ENCODE measurements at regions of chr2 and their contacts with region 1.

Region 1: DNA sequence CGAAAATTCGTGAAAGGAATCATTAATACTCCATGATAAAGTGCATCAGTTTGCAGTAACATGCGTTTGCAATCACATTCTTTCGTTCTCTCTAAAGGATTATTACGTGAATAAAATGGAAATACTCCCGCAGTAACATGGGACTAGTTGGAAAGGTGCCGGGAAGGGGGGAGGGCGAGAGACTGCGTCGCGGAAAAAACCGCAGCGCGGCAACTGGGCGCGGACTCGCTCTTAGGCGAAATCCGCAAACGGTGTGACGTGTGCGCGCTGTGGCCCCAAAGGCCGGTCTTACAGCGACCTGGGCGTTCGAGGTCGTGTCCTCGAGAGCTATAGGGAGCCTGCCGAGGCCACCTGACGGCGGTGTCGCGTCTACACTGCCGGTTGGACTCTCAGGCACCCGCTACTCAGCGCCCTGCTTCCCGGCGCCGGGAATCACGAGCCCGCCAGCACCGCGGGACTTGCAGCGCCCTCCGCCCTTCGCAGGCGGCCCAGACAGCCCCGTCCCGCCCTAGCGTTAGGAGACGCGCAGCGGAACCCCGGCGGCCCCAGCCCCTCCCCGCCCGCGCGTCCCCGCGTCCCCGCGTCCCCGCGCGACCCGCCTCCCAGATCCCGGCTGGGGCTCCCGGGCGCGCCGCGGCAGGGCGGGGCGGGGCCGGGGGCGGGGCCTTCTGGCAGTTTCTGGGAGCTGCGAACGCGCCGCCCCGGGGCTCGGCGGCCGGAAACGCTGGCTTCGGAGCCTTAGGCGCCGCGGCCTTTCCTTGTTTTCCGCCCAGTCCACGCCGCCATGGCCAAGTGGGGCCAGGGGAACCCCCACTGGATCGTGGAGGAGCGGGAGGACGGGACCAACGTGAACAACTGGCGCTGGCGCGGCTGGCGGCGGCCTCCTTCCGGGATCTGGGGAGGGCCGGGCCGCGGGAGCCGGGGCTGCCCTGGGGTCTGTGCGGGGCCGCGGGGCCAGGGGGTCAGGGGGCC is 15.1 kb downstream of the C2orf74 start:
- DNase-seq: peak; percentile 86 to 98 (median 94)
- ATAC-seq: peak; percentile 84
- H3K4me3 ChIP-seq: peak overlapping the region; percentile 88
- H3K4me3 Mint-ChIP-seq: peak overlapping the region; percentile 90
- H3K27ac ChIP-seq: peak overlapping the region; percentile 90 to 91
- H3K27ac Mint-ChIP-seq: peak overlapping the region; percentile 86
- H3K4me1 ChIP-seq: peaks cover 57% of the 10 kb centered on the region
- H3K4me1 Mint-ChIP-seq: peaks cover 48% of the 10 kb centered on the region
- H3K27me3 ChIP-seq: no peaks in the 10 kb centered on the region
- H3K27me3 Mint-ChIP-seq: no peaks in the 10 kb centered on the region
- CTCF ChIP-seq: no peak

Region 2: GRCh38 chr2:60881047-60881932 is 295.8 kb before region 1 on chr2 and contains the start of gene REL:
- CTCF ChIA-PET with region 1: no interaction called
- POLR2A ChIA-PET with region 1: interaction called, 26 read pairs
- intact Hi-C with region 1: loop called in 1 of 2 experiments (anchors 5 kb)
- DNase-seq: peak; percentile 75 to 98 (median 84)
- ATAC-seq: peak; percentile 83
- H3K4me3 ChIP-seq: peak within 1 kb of the TSS; percentile 94
- H3K4me3 Mint-ChIP-seq: peak within 1 kb of the TSS; percentile 96
- H3K27ac ChIP-seq: peak within 1 kb of the TSS; percentile 100
- H3K27ac Mint-ChIP-seq: peak within 1 kb of the TSS; percentile 98
- H3K4me1 ChIP-seq: peaks cover 5% of the 10 kb centered on the region
- H3K4me1 Mint-ChIP-seq: peaks cover 42% of the 10 kb centered on the region
- H3K27me3 ChIP-seq: no peaks in the 10 kb centered on the region
- H3K27me3 Mint-ChIP-seq: no peaks in the 10 kb centered on the region
- CTCF ChIP-seq: no peak
- total RNA-seq, gene REL: 91.9 to 99.9 TPM

Region 3: GRCh38 chr2:61065715-61066709 is 111.0 kb before region 1 on chr2 and contains the start of gene SANBR:
- CTCF ChIA-PET with region 1: interaction called, 3 read pairs
- POLR2A ChIA-PET with region 1: interaction called, 11 read pairs
- intact Hi-C with region 1: loop called (anchors 5 kb)
- DNase-seq: peak; percentile 59 to 93 (median 78)
- ATAC-seq: peak; percentile 97
- H3K4me3 ChIP-seq: peak within 1 kb of the TSS; percentile 63
- H3K4me3 Mint-ChIP-seq: peak within 1 kb of the TSS; percentile 99
- H3K27ac ChIP-seq: peak within 1 kb of the TSS in 1 of 2 donors; percentile 30
- H3K27ac Mint-ChIP-seq: peak within 1 kb of the TSS; percentile 68
- H3K4me1 ChIP-seq: peaks cover 11% of the 10 kb centered on the region
- H3K4me1 Mint-ChIP-seq: peaks cover 7% of the 10 kb centered on the region
- H3K27me3 ChIP-seq: no peaks in the 10 kb centered on the region
- H3K27me3 Mint-ChIP-seq: no peaks in the 10 kb centered on the region
- CTCF ChIP-seq: no peak
- total RNA-seq, gene SANBR: 1.1 to 1.3 TPM

Region 4: GRCh38 chr2:61165946-61166345 is 11.1 kb before region 1 on chr2:
- CTCF ChIA-PET with region 1: interaction called, 3 read pairs
- POLR2A ChIA-PET with region 1: interaction called, 11 read pairs
- intact Hi-C with region 1: no loop called
- DNase-seq: no peak
- ATAC-seq: no peak
- H3K4me3 ChIP-seq: no peak overlapping the region
- H3K4me3 Mint-ChIP-seq: no peak overlapping the region
- H3K27ac ChIP-seq: no peak overlapping the region
- H3K27ac Mint-ChIP-seq: no peak overlapping the region
- H3K4me1 ChIP-seq: no peaks in the 10 kb centered on the region
- H3K4me1 Mint-ChIP-seq: peaks cover 8% of the 10 kb centered on the region
- H3K27me3 ChIP-seq: no peaks in the 10 kb centered on the region
- H3K27me3 Mint-ChIP-seq: no peaks in the 10 kb centered on the region
- CTCF ChIP-seq: no peak

Region 5: DNA sequence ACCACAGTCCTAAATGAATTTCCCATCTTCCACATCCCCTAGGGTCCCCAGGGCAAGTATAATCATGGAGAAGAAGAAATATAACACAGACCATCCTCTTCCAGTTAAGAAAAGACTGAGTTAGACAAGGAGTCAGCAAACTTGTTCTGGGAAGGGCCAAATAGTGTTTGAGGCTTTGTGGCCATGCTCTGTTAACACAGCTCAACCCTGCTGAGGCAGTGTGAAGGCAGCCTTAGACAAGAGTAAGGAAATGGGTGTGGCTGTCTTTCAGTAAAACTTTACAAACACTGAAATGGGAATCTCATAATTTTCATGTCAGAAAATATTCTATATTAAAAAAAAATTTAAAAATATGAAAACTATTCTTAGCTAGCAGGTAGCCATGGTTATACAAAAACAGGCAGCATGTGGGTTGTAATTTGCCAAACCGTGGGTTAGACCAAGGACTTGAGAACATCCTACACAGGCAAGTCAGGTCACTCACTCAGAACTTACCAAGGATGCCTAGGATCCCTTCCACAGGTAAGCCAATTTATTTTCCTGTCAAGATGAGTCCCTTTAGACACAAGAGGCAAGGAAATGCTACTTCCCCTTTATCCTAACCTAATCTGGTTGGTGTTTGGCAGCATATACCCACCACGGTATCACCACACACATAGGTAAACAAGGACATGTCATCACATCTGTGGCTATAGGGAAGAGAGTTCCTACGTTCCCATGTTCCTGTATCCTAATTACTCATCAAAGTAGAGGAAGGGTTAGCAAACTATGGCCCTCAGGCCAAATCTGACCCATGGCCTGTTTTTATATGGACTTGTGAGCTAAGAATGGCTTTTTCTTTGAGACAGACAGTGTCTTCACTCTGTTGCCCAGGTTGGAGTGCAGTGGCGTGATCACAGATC is 16.9 kb after region 1 on chr2:
- CTCF ChIA-PET with region 1: interaction called, 3 read pairs
- POLR2A ChIA-PET with region 1: interaction called, 33 read pairs
- intact Hi-C with region 1: no loop called
- DNase-seq: peak in 1 of 14 experiments; percentile 43
- ATAC-seq: no peak
- H3K4me3 ChIP-seq: no peak overlapping the region
- H3K4me3 Mint-ChIP-seq: no peak overlapping the region
- H3K27ac ChIP-seq: no peak overlapping the region
- H3K27ac Mint-ChIP-seq: peak overlapping the region; percentile 76
- H3K4me1 ChIP-seq: peaks cover 11% of the 10 kb centered on the region
- H3K4me1 Mint-ChIP-seq: peaks cover 23% of the 10 kb centered on the region
- H3K27me3 ChIP-seq: no peaks in the 10 kb centered on the region
- H3K27me3 Mint-ChIP-seq: no peaks in the 10 kb centered on the region
- CTCF ChIP-seq: no peak

Region 6: DNA sequence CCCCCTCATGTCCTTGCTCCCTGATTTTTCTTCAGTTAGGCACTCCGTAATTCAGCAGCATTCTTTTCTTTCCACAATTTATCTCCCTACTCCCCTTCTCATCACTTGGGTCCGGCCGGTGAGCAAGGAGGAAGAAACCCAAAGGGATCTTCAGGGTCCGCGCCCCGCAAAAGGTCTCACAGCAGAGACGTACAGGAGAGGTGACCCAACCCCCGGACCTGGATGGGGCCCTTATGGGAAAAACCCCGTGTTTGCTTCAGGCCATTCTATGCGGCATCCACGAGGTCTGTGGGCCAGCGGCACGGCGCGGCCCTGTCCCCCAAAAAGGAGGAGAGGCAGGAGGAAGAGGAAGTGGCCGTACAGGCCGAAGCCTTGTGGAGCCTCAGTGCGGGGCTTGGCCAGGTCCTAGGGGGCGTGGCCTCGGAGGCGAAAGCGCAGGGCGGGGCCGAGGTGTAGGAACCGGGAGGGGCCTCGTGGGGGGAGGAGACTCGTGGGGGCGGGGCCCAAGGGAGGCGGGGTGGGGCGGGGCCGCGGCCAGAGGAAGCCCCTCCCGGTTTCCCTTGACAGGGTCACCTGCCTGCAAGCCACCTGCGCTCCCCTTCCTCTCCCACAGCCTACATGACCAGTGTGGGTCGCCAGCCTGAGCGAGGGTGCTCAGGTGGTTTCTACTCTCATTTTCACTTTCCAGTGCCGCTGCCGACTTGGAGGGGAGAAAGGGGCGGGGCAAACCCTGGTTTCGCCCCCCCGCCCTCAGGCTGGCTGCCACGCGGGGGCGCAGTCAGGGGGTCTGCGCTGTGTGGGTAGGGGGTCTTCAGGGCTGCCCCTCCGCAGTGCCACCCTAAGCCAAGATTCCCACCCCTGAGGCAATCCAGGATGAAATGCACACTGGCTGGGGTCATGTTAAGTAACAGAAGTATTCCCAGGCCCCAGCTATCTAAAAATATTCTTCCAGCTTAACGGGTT is 517.6 kb after region 1 on chr2:
- CTCF ChIA-PET with region 1: no interaction called
- POLR2A ChIA-PET with region 1: no interaction called
- intact Hi-C with region 1: loop called in 1 of 2 experiments (anchors 5 kb)
- DNase-seq: peak; percentile 65 to 90 (median 80)
- ATAC-seq: peak; percentile 95
- H3K4me3 ChIP-seq: peak overlapping the region; percentile 83
- H3K4me3 Mint-ChIP-seq: peak overlapping the region; percentile 89
- H3K27ac ChIP-seq: peak overlapping the region; percentile 29 to 59
- H3K27ac Mint-ChIP-seq: peak overlapping the region; percentile 85
- H3K4me1 ChIP-seq: peaks cover 11% of the 10 kb centered on the region
- H3K4me1 Mint-ChIP-seq: peaks cover 9% of the 10 kb centered on the region
- H3K27me3 ChIP-seq: no peaks in the 10 kb centered on the region
- H3K27me3 Mint-ChIP-seq: no peaks in the 10 kb centered on the region
- CTCF ChIP-seq: peak; percentile 31

Region 7: DNA sequence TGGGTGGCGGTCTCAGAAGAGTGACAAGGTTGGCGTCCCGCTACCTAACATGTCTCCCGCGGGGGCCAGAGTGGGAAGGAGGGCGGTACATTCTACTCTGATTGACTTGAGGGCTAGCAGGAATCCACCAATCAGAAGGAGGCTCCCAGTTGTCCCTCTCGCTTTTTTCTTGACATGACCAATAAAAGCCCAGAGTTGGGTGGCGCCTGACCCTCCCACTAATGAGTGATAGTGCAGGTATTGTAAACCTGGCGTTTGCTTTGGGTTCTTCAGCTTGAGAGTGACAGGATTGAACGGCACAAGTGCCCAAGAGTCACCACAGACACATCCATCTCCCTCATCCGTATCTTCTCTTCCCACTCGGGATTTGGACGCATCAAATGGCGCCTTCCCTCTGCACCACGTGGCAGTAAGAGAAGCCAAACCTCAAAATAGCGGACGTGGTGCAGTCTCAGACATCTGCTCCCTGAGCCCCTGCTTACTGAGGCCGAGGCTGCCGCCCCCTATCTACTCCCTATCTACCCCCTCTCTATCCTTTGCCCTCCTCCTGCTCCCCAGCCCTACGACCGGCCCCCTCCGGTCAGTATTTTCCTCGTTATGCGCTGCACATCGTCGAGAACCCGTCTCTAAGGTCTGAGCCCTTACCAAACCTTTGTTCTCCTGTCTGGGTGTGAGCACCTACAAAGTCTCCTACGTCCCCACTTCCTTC is 677.6 kb after region 1 on chr2:
- CTCF ChIA-PET with region 1: no interaction called
- POLR2A ChIA-PET with region 1: interaction called, 3 read pairs
- intact Hi-C with region 1: loop called in 1 of 2 experiments (anchors 5 kb)
- DNase-seq: peak; percentile 75 to 97 (median 83)
- ATAC-seq: peak; percentile 91
- H3K4me3 ChIP-seq: peak overlapping the region; percentile 98
- H3K4me3 Mint-ChIP-seq: peak overlapping the region; percentile 97
- H3K27ac ChIP-seq: peak overlapping the region; percentile 65 to 79
- H3K27ac Mint-ChIP-seq: peak overlapping the region; percentile 94
- H3K4me1 ChIP-seq: peaks cover 14% of the 10 kb centered on the region
- H3K4me1 Mint-ChIP-seq: peaks cover 16% of the 10 kb centered on the region
- H3K27me3 ChIP-seq: no peaks in the 10 kb centered on the region
- H3K27me3 Mint-ChIP-seq: no peaks in the 10 kb centered on the region
- CTCF ChIP-seq: no peak

Measured in CD4-positive, alpha-beta T cell (primary cell).